ENCODE measurements at regions of chr11 and their contacts with region 1.

Region 1: GRCh38 chr11:66638177-66639065 is at the start of gene RBM4:
- DNase-seq: peak; percentile 97 to 100 (median 99)

Region 2: GRCh38 chr11:66592457-66593302 is 45.7 kb before region 1 on chr11 and contains the starts of genes CCDC87 and CCS:
- intact Hi-C with region 1: loop called (anchors 2 kb)
- DNase-seq: peak; percentile 92 to 99 (median 98)

Region 3: GRCh38 chr11:66663741-66664296 is 25.4 kb after region 1 on chr11:
- intact Hi-C with region 1: no loop called
- DNase-seq: no peak